ENCODE measurements at regions of chr5 and their contacts with region 1.

Region 1: DNA sequence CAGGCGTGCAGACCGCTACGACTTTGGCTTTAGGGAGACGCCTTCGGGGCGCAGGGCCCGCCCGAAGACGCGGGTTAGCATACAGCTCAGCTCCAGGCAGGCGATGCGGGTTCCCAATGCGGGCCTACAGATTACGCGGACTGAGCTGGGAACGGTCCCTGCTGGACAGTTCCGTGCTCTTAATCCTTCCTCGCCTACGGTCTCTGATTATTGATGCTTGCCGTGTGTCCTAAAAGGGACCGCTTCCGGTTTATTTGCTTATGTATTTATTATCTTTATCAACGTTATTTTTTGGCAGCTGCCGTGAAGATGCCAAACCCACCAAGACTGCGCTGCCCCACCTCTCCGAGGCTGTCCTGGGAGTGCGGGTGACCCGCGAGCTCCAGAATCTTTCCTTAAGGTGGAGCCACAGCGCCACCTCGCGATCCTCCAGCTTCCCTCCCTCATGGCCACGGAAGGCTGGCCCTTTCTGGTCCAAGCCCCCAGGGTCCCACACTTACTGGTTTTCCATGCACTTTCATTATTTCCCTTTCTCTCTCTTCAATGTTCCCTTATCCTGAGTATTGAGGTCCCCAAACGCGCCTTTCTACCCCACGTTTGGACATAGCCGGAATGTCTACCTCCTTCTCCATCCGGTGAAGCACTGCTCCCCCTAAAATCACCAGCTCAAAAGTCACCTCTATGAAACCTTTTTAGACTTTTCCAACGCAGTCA is 7.0 kb upstream of the EBF1 start:
- DNase-seq: peak; percentile 86
- H3K4me3 ChIP-seq: peak overlapping the region; percentile 68
- H3K27ac ChIP-seq: no peak overlapping the region
- H3K4me1 ChIP-seq: peaks cover 17% of the 10 kb centered on the region
- H3K27me3 ChIP-seq: no peaks in the 10 kb centered on the region

Region 2: GRCh38 chr5:158013939-158014338 is 1092.8 kb before region 1 on chr5:
- in situ Hi-C with region 1: loop called (anchors 25 kb)
- DNase-seq: peak; percentile 77
- H3K4me3 ChIP-seq: no peak overlapping the region
- H3K27ac ChIP-seq: no peak overlapping the region
- H3K4me1 ChIP-seq: peaks cover 4% of the 10 kb centered on the region; the same call in 1 of the 2 replicates
- H3K27me3 ChIP-seq: peaks cover 8% of the 10 kb centered on the region

Region 3: GRCh38 chr5:158174918-158175851 is 931.5 kb before region 1 on chr5:
- in situ Hi-C with region 1: loop called (anchors 10 kb)
- DNase-seq: peak; percentile 83
- H3K4me3 ChIP-seq: no peak overlapping the region
- H3K27ac ChIP-seq: no peak overlapping the region
- H3K4me1 ChIP-seq: peaks cover 17% of the 10 kb centered on the region; the same call in 1 of the 2 replicates
- H3K27me3 ChIP-seq: no peaks in the 10 kb centered on the region

Region 4: DNA sequence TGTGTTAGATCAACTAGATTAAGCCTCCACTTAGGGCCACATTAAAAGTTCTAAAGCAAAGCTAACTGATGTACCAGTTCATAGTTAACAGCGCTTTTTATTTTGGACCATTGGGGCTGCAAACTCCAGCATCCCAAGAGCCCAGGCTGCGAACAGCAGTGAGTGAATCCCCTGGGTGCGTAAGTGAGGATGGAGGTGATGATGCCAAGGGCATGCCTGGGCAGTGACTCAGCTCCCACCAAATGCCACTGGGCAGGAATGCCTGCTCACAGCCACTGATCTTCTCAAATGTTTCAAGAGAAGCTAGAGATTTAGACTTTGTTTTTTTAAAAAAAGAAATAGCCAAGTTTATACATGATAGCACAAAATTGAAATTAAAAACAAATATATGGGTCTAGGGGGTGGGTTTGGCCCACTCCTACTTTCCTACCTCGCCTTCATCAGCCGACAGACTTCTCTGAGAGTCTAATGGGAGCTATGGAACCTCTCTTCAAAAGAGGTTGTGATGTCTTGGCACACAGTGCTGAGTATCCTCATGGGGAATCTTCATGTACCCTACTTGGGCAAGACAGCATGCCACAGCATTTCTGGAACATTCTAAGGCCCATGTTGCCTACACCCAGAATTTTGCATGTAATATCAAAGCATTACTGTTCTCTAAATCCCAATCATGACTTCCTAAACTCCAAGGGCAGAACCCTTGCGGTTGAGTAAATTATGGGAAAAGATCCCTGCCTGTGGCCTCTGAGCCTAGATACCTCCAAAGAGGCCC is 405.1 kb before region 1 on chr5:
- in situ Hi-C with region 1: loop called (anchors 5 kb)
- DNase-seq: peak; percentile 93
- H3K4me3 ChIP-seq: peak overlapping the region; percentile 57
- H3K27ac ChIP-seq: peak overlapping the region; percentile 92
- H3K4me1 ChIP-seq: peaks cover 61% of the 10 kb centered on the region
- H3K27me3 ChIP-seq: no peaks in the 10 kb centered on the region